ENCODE measurements at regions of chr19 and their contacts with region 1.

Region 1: DNA sequence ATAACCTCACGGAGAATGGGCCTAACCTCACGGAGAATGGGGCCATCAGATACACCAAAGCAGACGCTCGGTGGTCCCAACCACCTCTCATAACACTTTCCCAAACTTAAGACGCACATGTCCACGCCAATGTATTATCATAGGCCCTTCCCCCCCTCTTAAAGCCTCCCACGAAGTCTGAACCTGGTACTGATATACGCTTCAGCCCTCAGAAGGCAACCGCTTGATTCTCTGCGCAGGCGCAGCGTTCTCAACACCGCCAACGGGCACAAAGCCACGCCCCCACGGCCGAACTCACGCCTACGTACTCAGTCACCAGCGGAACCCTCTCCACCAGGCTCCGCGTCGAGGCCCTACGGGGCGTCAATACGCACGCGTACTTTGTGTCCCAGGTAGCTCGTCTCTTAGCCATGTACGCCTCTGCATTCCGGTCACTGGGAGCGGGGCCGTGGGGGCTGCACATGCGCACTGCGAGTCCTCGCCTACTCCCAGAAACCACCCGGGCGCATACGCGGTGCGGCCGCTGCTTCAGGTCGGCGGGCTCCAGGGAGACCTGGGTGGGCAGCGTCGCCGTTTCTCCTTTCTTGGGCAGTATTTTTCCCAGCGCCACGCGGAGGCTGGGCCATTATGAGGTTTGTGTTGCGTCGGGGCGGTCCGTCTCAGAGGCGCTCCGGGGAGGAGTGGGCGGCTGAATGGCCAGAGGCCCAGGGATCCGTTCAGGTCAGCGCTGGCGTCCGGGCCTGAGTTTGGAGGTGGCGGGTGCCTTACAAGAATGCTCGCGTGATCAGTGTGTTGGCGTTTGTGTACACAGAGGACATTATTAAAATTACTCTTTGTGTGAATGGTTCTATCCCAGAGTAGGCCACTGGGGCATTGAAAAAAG is 25.3 kb downstream of the ZNF582 start:
- DNase-seq: peak; percentile 93
- ATAC-seq: peak; percentile 99
- H3K4me3 ChIP-seq: peak overlapping the region; percentile 44 to 68 (median 60)
- H3K27ac ChIP-seq: peak overlapping the region; percentile 80
- H3K4me1 ChIP-seq: 0 out of 2 replicates have a peak, but pooled peaks cover 10% of the 10 kb centered on the region
- H3K27me3 ChIP-seq: no peaks in the 10 kb centered on the region
- CTCF ChIP-seq: no peak
- EP300 ChIP-seq: no peak
- POLR2A ChIP-seq: peak; percentile 39 to 67; a peak in 3 of 4 replicates
- RAD21 ChIP-seq: no peak

Region 2: GRCh38 chr19:56301886-56302620 is 66.0 kb before region 1 on chr19:
- CTCF ChIA-PET with region 1: no interaction called
- POLR2A ChIA-PET with region 1: no interaction called
- in situ Hi-C with region 1: no loop called
- intact Hi-C with region 1: no loop called
- DNase-seq: no peak
- ATAC-seq: no peak
- H3K4me3 ChIP-seq: no peak overlapping the region
- H3K27ac ChIP-seq: no peak overlapping the region
- H3K4me1 ChIP-seq: no peaks in the 10 kb centered on the region
- H3K27me3 ChIP-seq: no peaks in the 10 kb centered on the region
- CTCF ChIP-seq: no peak
- EP300 ChIP-seq: no peak
- POLR2A ChIP-seq: no peak
- RAD21 ChIP-seq: no peak

Region 3: GRCh38 chr19:56356944-56357343 is 11.1 kb before region 1 on chr19:
- CTCF ChIA-PET with region 1: no interaction called
- POLR2A ChIA-PET with region 1: interaction called, 13 read pairs
- in situ Hi-C with region 1: no loop called
- intact Hi-C with region 1: no loop called
- DNase-seq: no peak
- ATAC-seq: no peak
- H3K4me3 ChIP-seq: no peak overlapping the region
- H3K27ac ChIP-seq: no peak overlapping the region
- H3K4me1 ChIP-seq: peaks cover 42% of the 10 kb centered on the region
- H3K27me3 ChIP-seq: no peaks in the 10 kb centered on the region
- CTCF ChIP-seq: no peak
- EP300 ChIP-seq: no peak
- POLR2A ChIP-seq: no peak
- RAD21 ChIP-seq: no peak

Region 4: DNA sequence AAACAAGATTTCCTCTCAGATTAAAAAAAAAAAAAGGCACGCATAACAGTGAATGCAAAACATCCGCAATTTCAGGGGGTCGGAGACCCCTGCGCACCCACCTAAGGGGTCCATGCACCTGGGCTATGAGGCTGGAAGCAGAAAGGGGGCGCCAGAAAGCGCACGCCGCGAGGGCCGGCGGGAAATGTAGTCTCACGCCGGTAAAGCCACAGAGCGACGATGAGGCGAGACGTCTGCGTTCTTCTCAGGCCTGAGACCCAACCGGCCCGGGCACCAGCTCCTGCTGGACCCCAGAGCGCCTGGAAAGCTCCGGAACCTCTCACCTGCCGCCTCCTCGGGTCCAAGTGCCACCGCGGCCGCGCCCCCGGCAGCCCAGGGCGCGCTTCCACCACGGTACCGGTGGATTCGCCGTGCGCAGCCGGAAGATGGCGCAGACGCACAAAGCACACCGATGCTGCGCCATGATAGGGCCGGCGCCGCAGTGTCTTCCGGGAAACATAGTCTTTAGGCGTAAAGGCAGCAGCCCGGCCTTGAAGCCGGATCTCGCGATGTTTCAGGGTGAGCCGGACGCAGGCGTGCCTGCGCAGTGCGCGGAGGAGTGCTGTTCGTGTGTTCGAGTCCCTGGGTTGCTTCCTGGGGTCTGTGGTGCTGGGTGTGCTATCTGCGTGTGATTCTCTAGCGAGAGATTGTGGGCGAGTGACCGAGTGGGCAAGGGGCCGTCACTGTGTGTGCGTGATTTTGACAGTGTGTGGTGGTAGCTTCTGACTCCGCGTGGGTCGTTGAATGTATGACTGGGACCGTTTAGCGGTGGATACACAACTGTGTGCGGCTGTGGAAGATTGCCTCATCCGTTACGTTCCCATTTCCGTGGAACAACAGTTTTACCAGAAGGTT is 25.3 kb after region 1 on chr19 and contains the start of gene ZNF582:
- CTCF ChIA-PET with region 1: no interaction called
- POLR2A ChIA-PET with region 1: no interaction called
- in situ Hi-C with region 1: no loop called
- intact Hi-C with region 1: loop called (anchors 1 kb)
- DNase-seq: peak; percentile 80
- ATAC-seq: peak; percentile 94
- H3K4me3 ChIP-seq: peak within 1 kb of the TSS; percentile 55 to 77 (median 59)
- H3K27ac ChIP-seq: peak within 1 kb of the TSS; percentile 79
- H3K4me1 ChIP-seq: 0 out of 2 replicates have a peak, but pooled peaks cover 4% of the 10 kb centered on the region
- H3K27me3 ChIP-seq: no peaks in the 10 kb centered on the region
- CTCF ChIP-seq: peak; percentile 73
- EP300 ChIP-seq: no peak
- POLR2A ChIP-seq: no peak
- RAD21 ChIP-seq: peak; percentile 40; the same call in 1 of the 2 replicates
- total RNA-seq, gene ZNF582: 1.6 and 2.4 TPM in 2 replicates

Region 5: GRCh38 chr19:56403764-56404704 is 36.0 kb after region 1 on chr19 and contains the start of gene ZNF583:
- CTCF ChIA-PET with region 1: no interaction called
- POLR2A ChIA-PET with region 1: interaction called, 13 read pairs
- in situ Hi-C with region 1: no loop called
- intact Hi-C with region 1: no loop called
- DNase-seq: peak; percentile 83
- ATAC-seq: peak; percentile 98
- H3K4me3 ChIP-seq: peak within 1 kb of the TSS; percentile 65 to 84 (median 79)
- H3K27ac ChIP-seq: peak within 1 kb of the TSS; percentile 70
- H3K4me1 ChIP-seq: peaks cover 16% of the 10 kb centered on the region
- H3K27me3 ChIP-seq: no peaks in the 10 kb centered on the region; a peak in 1 of 5 replicates
- CTCF ChIP-seq: peak; percentile 15; the same call in 1 of the 2 replicates
- EP300 ChIP-seq: no peak
- POLR2A ChIP-seq: peak in 1 of 2 experiments; percentile 60; a peak in 2 of 4 replicates
- RAD21 ChIP-seq: 0 out of 2 replicates have a peak, but pooled peaks have one; percentile 26
- total RNA-seq, gene ZNF583: 5.3 and 5.9 TPM in 2 replicates

Measured in HepG2 (cell line).